Naive thymus-derived CD8-positive, alpha-beta T cell (primary cell): ENCODE measurements at regions of chr9 and their contacts with region 1.

Region 1: GRCh38 chr9:20622330-20623020 is at the start of gene MLLT3:
- DNase-seq: peak; percentile 91 to 98 (median 97)
- ATAC-seq: peak; percentile 71 to 73
- H3K4me3 Mint-ChIP-seq: peak within 1 kb of the TSS; percentile 91 to 100 (median 97)
- H3K27ac Mint-ChIP-seq: peak within 1 kb of the TSS; percentile 86 to 99 (median 98)
- H3K4me1 Mint-ChIP-seq: peaks cover 26 to 51% (median 46%) of the 10 kb centered on the region in 4 donors
- H3K27me3 Mint-ChIP-seq: no peaks in the 10 kb centered on the region
- polyA plus RNA-seq, gene MLLT3: 28.0 to 42.9 (median 39.0) TPM

Region 2: GRCh38 chr9:20319641-20320337 is 302.7 kb before region 1 on chr9:
- POLR2A ChIA-PET with region 1: interaction called, 10 read pairs
- DNase-seq: no peak
- ATAC-seq: peak in 1 of 2 donors; percentile 32
- H3K4me3 Mint-ChIP-seq: peak overlapping the region in 9 of 10 donors; percentile 0 to 63 (median 15)
- H3K27ac Mint-ChIP-seq: peak overlapping the region in 9 of 10 donors; percentile 13 to 97 (median 67)
- H3K4me1 Mint-ChIP-seq: peaks cover 47 to 96% (median 75%) of the 10 kb centered on the region in 4 donors
- H3K27me3 Mint-ChIP-seq: no peaks in the 10 kb centered on the region

Region 3: DNA sequence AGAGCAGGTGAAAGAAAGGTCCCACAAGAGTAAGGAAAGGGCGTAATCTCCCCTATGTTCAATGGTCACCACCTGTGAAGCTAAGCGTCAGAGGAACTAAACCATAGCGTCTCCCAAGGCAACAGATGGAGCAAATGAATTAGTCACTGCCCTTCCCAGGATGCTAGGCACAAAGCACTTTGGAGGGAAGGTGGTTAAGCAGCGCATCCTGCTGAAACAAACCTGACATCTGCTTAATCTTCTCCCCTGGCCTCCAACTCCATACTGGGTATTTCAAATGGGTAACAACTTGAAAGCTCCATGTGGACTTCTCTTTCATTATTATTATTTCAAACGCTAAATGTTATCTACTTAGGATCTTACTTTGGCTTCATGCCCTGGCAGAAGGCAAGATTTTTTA is 227.5 kb before region 1 on chr9:
- POLR2A ChIA-PET with region 1: interaction called, 11 read pairs
- DNase-seq: no peak
- ATAC-seq: no peak
- H3K4me3 Mint-ChIP-seq: peak overlapping the region in 1 of 10 donors; percentile 45
- H3K27ac Mint-ChIP-seq: peak overlapping the region in 4 of 10 donors; percentile 9 to 61 (median 36)
- H3K4me1 Mint-ChIP-seq: peaks cover 22 to 57% (median 55%) of the 10 kb centered on the region in 4 donors
- H3K27me3 Mint-ChIP-seq: no peaks in the 10 kb centered on the region

Region 4: DNA sequence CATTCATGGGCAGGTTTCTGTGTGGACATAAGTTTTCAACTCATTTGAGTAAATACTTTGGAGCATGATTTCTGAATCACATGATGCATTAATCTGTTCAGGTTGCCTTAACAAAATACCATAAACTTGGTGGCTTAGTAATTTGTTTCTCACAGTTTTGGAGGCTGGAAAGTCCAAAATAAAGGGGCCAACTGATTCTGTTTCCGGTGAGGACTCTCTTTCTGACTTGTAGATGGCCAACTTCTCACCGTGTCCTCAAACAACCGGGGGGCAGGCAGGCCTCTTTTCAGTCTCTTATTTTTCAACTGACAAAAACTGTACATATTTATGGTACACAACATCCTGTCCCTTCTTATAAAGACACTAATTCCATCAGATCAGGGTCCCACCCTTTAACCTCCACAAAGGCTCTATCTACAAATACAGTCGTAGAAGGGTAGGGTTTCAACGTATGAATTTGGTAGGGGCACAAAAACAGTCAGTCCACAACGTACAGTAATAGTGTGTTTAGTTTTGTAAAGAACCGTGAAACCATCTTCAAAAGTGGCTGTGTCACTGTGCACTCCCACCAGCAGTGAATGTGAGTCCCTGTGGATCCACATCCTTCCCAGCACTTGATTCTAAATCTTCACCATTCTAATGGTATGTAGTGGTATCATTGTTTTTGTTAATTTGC is 37.4 kb before region 1 on chr9:
- POLR2A ChIA-PET with region 1: no interaction called
- DNase-seq: no peak
- ATAC-seq: no peak
- H3K4me3 Mint-ChIP-seq: no peak overlapping the region
- H3K27ac Mint-ChIP-seq: no peak overlapping the region
- H3K4me1 Mint-ChIP-seq: peaks cover 28 to 63% (median 45%) of the 10 kb centered on the region in 4 donors
- H3K27me3 Mint-ChIP-seq: no peaks in the 10 kb centered on the region

Region 5: GRCh38 chr9:20604562-20604961 is 17.9 kb before region 1 on chr9:
- POLR2A ChIA-PET with region 1: interaction called, 16 read pairs
- DNase-seq: no peak
- ATAC-seq: peak; percentile 49 to 70
- H3K4me3 Mint-ChIP-seq: peak overlapping the region; percentile 33 to 72 (median 50)
- H3K27ac Mint-ChIP-seq: peak overlapping the region in 9 of 10 donors; percentile 1 to 71 (median 42)
- H3K4me1 Mint-ChIP-seq: peaks cover 19 to 87% (median 80%) of the 10 kb centered on the region in 4 donors
- H3K27me3 Mint-ChIP-seq: no peaks in the 10 kb centered on the region

Region 6: GRCh38 chr9:20632705-20633104 is 10.2 kb after region 1 on chr9:
- POLR2A ChIA-PET with region 1: no interaction called
- DNase-seq: no peak
- ATAC-seq: no peak
- H3K4me3 Mint-ChIP-seq: no peak overlapping the region
- H3K27ac Mint-ChIP-seq: no peak overlapping the region
- H3K4me1 Mint-ChIP-seq: peaks cover 0 to 2% (median under 1%) of the 10 kb centered on the region in 4 donors
- H3K27me3 Mint-ChIP-seq: peaks cover 0 to 15% (median 2%) of the 10 kb centered on the region in 5 donors

Region 7: GRCh38 chr9:20684035-20684872 is 61.8 kb after region 1 on chr9 and contains the start of gene FOCAD:
- POLR2A ChIA-PET with region 1: interaction called, 43 read pairs
- DNase-seq: peak; percentile 91 to 97 (median 96)
- ATAC-seq: peak; percentile 97 to 98
- H3K4me3 Mint-ChIP-seq: peak within 1 kb of the TSS; percentile 83 to 97 (median 92)
- H3K27ac Mint-ChIP-seq: peak within 1 kb of the TSS; percentile 53 to 94 (median 90)
- H3K4me1 Mint-ChIP-seq: peaks cover 14 to 27% (median 19%) of the 10 kb centered on the region in 4 donors
- H3K27me3 Mint-ChIP-seq: no peaks in the 10 kb centered on the region
- polyA plus RNA-seq, gene FOCAD: 12.5 to 15.3 (median 14.9) TPM